OCI-LY7 (cell line): ENCODE measurements at regions of chr7 and their contacts with region 1.

Region 1: GRCh38 chr7:99040104-99040958 is 103.6 kb downstream of the SMURF1 start:
- DNase-seq: peak; percentile 72
- H3K4me3 ChIP-seq: no peak overlapping the region
- H3K27ac ChIP-seq: no peak overlapping the region
- H3K4me1 ChIP-seq: peaks cover 12% of the 10 kb centered on the region
- CTCF ChIP-seq: peak; percentile 87

Region 2: DNA sequence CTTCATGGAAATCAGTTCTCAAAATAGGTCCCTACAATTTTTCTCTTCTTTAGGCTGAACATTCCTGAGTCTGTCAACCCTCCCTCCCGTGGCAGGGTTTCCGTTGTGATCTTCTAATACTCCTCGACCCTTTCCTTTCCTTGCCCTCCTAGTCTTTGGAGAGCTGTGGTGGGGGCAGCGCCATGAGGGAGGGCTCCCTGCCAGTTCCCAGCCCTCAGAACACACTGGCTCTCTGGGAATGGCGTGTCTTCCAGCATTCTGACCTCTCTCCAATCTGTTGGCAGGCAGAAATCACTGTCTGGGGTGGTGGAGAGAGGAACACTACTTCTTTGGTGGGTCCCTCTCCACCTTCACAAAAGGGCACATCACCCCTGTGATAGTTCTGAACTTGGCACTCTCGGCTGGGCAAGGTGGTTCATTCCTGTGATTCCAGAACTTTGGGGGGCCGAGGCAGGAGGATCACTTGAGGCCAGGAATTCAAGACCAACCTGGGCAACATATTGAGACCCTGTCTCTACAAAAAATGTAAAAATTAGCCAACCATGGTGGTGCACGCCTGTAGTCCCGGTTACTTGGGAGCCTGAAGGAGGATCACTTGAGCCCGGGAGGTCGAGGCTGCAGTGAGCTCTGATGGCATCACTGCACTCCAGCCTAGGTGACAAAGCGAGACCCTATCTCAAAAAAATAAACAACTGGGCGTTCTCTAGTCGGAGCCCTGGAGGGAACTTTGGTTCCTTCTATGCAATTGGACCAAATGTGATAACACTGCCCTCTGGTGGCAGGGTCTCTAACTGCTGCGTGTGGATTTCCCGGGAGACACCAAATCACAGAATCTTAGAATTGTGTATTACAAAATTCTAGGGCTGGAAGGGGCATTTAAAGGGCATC is 272.2 kb after region 1 on chr7:
- CTCF ChIA-PET with region 1: interaction called, 3 read pairs
- POLR2A ChIA-PET with region 1: no interaction called
- intact Hi-C with region 1: loop called (anchors 1 kb)
- DNase-seq: peak; percentile 70
- H3K4me3 ChIP-seq: no peak overlapping the region
- H3K27ac ChIP-seq: no peak overlapping the region
- H3K4me1 ChIP-seq: no peaks in the 10 kb centered on the region
- CTCF ChIP-seq: peak; percentile 96

Region 3: GRCh38 chr7:99325545-99326407 is 285.4 kb after region 1 on chr7 and contains the start of gene ARPC1A:
- CTCF ChIA-PET with region 1: no interaction called
- POLR2A ChIA-PET with region 1: no interaction called
- intact Hi-C with region 1: loop called (anchors 5 kb)
- DNase-seq: peak; percentile 93
- H3K4me3 ChIP-seq: peak within 1 kb of the TSS; percentile 87
- H3K27ac ChIP-seq: peak within 1 kb of the TSS; percentile 16
- H3K4me1 ChIP-seq: peaks cover 19% of the 10 kb centered on the region
- CTCF ChIP-seq: 0 out of 2 replicates have a peak, but pooled peaks have one; percentile 14
- total RNA-seq, gene ARPC1A: 51.0 and 71.8 TPM in 2 replicates